Activated naive CD8-positive, alpha-beta T cell treated with anti-CD3 and anti-CD28 coated beads, Interleukin-2, amount 10 ng/mL, durations not matched to agents 7 days and 5 days (primary cell): ENCODE measurements at regions of chr14 and their contacts with region 1.

Region 1: GRCh38 chr14:72516936-72517700 is 376.8 kb downstream of the DPF3 start:
- DNase-seq: peak; percentile 76
- ATAC-seq: no peak
- H3K4me3 Mint-ChIP-seq: peak overlapping the region; percentile 42
- H3K27ac Mint-ChIP-seq: peak overlapping the region; percentile 5
- H3K4me1 Mint-ChIP-seq: peaks cover 62% of the 10 kb centered on the region
- H3K27me3 Mint-ChIP-seq: peaks cover 8% of the 10 kb centered on the region

Region 2: DNA sequence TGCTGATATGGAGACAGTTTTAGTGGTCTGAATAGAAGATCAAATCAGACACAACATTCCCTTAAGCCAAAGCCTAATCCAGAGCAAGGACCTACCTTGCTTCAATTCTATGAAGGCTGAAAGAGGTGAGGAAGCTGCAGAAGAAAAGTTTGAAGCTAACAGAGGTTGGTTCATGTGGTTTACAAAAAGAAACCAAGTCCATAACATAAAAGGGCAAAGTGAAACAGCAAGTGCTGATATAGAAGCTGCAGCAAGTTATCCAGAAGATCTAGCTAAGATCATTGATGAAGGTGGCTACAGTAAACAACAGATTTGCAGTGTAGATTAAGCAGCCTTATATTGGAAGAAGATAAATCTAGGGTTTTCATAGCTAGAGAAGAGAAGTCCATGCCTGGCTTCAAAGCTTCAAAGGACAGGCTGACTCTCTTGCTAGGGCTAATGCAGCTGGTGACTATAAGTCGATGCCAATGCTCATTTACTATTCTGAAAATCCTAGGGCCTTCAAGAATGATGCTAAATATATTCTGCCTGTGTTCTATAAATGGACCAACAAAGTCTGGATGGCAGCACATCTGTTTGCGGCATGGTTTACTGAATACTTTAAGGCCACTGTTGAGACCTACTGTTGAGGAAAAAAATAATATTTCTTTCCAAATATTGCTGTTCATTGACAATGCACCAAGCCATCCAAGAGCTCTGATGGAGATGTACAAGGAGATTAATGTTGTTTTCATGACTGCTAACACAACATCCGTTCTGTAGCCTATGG is 15.8 kb after region 1 on chr14:
- POLR2A ChIA-PET with region 1: interaction called, 13 read pairs
- DNase-seq: no peak
- ATAC-seq: peak; percentile 46
- H3K4me3 Mint-ChIP-seq: peak overlapping the region; percentile 62
- H3K27ac Mint-ChIP-seq: peak overlapping the region; percentile 89
- H3K4me1 Mint-ChIP-seq: peaks cover 64% of the 10 kb centered on the region
- H3K27me3 Mint-ChIP-seq: peaks cover 8% of the 10 kb centered on the region

Region 3: GRCh38 chr14:72893636-72894321 is 376.7 kb after region 1 on chr14 and contains the start of gene DPF3:
- POLR2A ChIA-PET with region 1: interaction called, 19 read pairs
- DNase-seq: peak; percentile 94
- ATAC-seq: peak; percentile 98
- H3K4me3 Mint-ChIP-seq: peak within 1 kb of the TSS; percentile 90
- H3K27ac Mint-ChIP-seq: peak within 1 kb of the TSS; percentile 75
- H3K4me1 Mint-ChIP-seq: peaks cover 20% of the 10 kb centered on the region
- H3K27me3 Mint-ChIP-seq: peaks cover 51% of the 10 kb centered on the region
- total RNA-seq, gene DPF3: 3.8 to 4.1 TPM

Region 4: DNA sequence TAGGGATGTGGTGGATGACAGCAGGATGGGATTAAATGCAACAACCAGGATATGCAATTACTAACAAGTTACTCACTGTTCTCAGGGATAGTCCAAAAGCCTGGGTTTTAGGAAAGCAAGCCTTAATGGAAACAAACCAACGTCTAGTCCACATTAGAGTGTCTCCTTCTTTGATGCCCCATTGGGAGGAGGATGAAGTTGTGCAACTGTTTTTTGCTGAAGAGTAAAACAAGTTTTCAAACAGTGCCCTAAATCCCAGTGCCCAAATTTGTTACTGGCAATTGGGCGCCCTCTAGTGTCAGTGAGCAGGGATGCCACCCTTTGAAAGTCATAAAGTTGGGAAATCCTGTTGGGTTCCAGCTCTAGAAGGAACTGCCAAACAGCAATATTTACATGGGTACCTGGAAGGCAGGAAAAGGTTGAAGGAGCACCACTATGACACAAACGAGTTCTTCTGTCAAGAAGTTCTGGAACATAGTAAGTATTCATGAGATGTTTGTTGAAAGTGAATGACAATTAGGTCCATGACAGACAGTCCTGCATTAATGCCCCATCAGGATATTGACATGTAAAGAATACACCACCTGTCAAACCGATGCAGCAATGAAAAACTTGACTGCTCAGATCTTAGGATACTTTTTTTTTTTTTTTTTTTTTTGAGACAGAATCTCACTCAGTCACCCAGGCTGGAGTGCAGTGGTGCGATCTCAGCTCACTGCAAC is 387.9 kb after region 1 on chr14:
- POLR2A ChIA-PET with region 1: interaction called, 15 read pairs
- DNase-seq: no peak
- ATAC-seq: peak; percentile 66
- H3K4me3 Mint-ChIP-seq: no peak overlapping the region
- H3K27ac Mint-ChIP-seq: no peak overlapping the region
- H3K4me1 Mint-ChIP-seq: peaks cover 14% of the 10 kb centered on the region
- H3K27me3 Mint-ChIP-seq: peaks cover 33% of the 10 kb centered on the region